OCI-LY7 (cell line): ENCODE measurements at regions of chr1 and their contacts with region 1.

Region 1: DNA sequence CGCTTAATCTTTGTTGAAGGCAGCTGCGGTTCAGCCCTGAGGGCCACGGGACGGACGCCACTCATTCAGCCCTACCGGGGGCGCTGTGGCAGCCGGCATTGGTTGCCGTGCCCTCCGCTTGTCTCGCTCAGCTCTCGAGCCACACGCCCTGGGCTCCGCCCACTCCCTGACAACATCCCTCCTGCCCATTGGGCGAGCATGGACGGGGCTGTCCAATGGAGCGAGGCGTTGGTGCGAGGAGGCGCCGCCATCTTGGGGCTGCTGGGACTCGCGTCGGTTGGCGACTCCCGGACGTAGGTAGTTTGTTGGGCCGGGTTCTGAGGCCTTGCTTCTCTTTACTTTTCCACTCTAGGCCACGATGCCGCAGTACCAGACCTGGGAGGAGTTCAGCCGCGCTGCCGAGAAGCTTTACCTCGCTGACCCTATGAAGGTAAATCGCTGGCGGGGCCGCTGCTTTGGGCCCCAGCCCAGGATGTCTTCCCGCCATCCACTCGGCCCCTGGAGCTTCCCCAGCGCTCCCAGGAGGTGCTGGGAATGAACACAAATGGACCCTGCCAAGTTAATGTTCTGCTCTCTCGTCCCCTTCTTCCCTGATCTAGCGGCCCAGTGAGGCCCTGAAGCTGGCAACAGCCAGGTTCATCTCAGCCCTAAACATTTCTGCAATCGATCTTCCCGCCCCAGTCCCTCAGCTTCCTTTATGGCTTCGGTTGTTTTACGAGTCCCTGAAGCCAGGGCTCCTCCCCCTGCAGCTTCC is at the start of gene SRP9:
- DNase-seq: peak; percentile 100
- H3K4me3 ChIP-seq: peak within 1 kb of the TSS; percentile 78
- H3K27ac ChIP-seq: peak within 1 kb of the TSS; percentile 91
- H3K4me1 ChIP-seq: peaks cover 56% of the 10 kb centered on the region
- CTCF ChIP-seq: peak; percentile 91
- total RNA-seq, gene SRP9: 182 and 221 TPM in 2 replicates

Region 2: GRCh38 chr1:225627304-225627947 is 150.3 kb before region 1 on chr1:
- CTCF ChIA-PET with region 1: no interaction called
- POLR2A ChIA-PET with region 1: no interaction called
- intact Hi-C with region 1: no loop called
- DNase-seq: no peak
- H3K4me3 ChIP-seq: no peak overlapping the region
- H3K27ac ChIP-seq: no peak overlapping the region
- H3K4me1 ChIP-seq: no peaks in the 10 kb centered on the region
- CTCF ChIP-seq: no peak

Region 3: GRCh38 chr1:225746361-225747179 is 31.2 kb before region 1 on chr1:
- CTCF ChIA-PET with region 1: no interaction called
- POLR2A ChIA-PET with region 1: no interaction called
- intact Hi-C with region 1: no loop called
- DNase-seq: no peak
- H3K4me3 ChIP-seq: no peak overlapping the region
- H3K27ac ChIP-seq: no peak overlapping the region
- H3K4me1 ChIP-seq: peaks cover under 1% of the 10 kb centered on the region
- CTCF ChIP-seq: no peak

Region 4: DNA sequence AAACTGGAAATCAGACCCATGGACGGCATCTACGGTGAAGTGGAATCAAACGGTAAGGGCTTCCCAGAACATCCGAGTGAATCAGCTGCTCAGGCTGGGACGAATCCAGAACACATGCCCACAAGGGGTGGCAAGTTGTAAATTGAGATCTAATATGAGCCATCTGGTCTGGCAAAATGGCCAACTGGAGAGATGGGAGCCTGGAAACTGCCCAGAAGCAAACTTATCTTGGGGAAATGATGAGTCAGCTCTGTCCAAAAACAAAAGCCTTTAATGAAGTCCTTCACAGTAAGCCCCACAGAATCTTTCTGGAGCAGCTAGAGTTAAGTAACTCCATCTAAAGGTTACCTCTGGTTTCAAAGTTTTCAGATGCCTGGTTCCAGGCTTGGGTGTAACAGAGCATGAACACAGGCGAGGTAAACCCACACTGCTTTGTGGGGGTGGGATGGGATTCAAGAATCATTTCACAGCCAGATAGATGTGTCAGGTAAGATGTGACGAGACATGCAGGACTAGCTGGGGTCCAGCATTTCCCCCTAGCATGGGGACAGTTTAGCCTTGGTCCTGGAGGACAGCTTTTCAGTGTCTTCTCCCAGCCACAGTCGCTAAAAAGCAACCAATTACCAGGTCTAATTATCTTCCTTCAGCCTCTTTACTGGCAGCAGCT is 10.7 kb before region 1 on chr1:
- CTCF ChIA-PET with region 1: interaction called, 11 read pairs
- POLR2A ChIA-PET with region 1: interaction called, 14 read pairs
- intact Hi-C with region 1: no loop called
- DNase-seq: peak; percentile 24
- H3K4me3 ChIP-seq: peak overlapping the region; percentile 7
- H3K27ac ChIP-seq: peak overlapping the region; percentile 49
- H3K4me1 ChIP-seq: peaks cover 56% of the 10 kb centered on the region
- CTCF ChIP-seq: no peak

Region 5: GRCh38 chr1:225834417-225835329 is 56.9 kb after region 1 on chr1:
- CTCF ChIA-PET with region 1: no interaction called
- POLR2A ChIA-PET with region 1: interaction called, 11 read pairs
- intact Hi-C with region 1: no loop called
- DNase-seq: no peak
- H3K4me3 ChIP-seq: no peak overlapping the region
- H3K27ac ChIP-seq: no peak overlapping the region
- H3K4me1 ChIP-seq: no peaks in the 10 kb centered on the region
- CTCF ChIP-seq: no peak

Region 6: DNA sequence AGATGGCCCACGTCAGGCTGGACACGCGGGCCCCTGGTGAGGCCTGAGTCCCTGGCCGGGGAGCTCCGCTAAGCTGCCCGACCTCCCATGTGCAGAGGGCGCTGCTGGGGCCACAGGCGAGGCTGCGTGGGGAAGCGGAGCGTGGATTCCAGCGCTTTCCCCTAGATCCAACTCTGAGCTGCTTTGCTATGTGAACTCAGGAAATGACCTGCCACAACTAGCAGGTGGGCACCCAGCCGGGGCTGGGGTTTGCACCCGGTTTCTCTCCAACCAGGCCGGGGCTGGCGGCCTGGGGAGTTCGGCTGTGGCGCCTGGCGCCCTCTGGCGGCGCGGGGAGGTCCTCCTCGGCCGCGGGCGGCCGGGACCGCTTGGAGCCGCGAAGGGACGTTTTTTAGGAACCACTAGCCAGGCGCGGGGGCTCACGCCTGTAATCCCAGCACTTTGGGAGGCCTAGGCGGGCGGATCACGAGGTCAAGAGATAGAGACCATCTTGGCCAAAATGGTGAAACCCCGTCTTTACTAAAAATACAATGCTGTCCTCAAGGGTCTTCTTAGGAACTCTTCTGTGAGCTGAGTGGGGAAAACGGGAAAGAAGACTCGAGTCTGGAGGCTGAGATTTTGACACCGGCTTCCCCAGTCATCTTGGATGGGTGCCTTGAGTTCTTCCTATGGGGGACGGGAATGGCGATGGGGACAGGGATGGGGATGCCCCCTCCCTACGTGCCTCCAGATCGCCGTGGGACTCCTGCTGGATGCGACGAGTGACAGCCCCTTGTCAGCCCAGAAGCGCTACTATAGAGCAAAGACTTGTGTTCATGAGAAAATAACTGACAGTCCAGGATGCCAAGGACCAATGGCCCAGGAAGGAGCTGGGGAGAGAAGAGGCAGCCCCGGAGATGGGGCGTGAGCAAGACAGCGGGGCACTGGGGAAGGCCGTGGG is 133.7 kb after region 1 on chr1:
- CTCF ChIA-PET with region 1: interaction called, 3 read pairs
- POLR2A ChIA-PET with region 1: no interaction called
- intact Hi-C with region 1: loop called (anchors 2 kb)
- DNase-seq: no peak
- H3K4me3 ChIP-seq: no peak overlapping the region
- H3K27ac ChIP-seq: no peak overlapping the region
- H3K4me1 ChIP-seq: peaks cover 25% of the 10 kb centered on the region
- CTCF ChIP-seq: peak; percentile 32; the same call in 1 of the 2 replicates